HepG2 (cell line): ENCODE measurements at regions of chr4 and their contacts with region 1.

Region 1: DNA sequence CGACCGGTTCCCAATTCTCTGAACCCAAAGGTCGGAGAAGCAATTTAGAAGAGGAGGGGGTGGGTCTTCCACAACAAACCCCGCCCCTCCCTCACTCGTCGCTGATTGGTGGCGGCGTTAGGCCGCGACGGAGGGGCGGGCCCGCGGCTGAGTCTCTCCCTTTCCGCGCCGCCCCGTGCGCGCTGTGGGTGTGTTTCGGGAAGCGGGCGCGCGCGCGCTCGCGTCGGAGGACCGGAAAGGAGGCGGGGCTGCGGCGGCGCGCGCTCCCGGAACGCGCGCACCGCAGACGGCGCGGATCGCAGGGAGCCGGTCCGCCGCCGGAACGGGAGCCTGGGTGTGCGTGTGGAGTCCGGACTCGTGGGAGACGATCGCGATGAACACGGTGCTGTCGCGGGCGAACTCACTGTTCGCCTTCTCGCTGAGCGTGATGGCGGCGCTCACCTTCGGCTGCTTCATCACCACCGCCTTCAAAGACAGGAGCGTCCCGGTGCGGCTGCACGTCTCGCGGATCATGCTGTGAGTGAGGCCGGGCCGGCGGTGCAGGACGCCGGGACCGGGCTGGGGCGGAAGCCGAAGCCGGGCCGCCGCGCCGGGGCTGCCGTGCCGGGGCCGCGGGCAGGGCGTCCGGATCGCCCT is at the start of gene SPCS3:
- DNase-seq: peak; percentile 85
- ATAC-seq: peak; percentile 95
- H3K4me3 ChIP-seq: peak within 1 kb of the TSS; percentile 85 to 98 (median 96)
- H3K27ac ChIP-seq: peak within 1 kb of the TSS; percentile 89
- H3K4me1 ChIP-seq: peaks cover 34% of the 10 kb centered on the region
- H3K27me3 ChIP-seq: no peaks in the 10 kb centered on the region; a peak in 1 of 5 replicates
- CTCF ChIP-seq: no peak
- EP300 ChIP-seq: no peak
- POLR2A ChIP-seq: peak; percentile 92 to 94
- RAD21 ChIP-seq: 0 out of 2 replicates have a peak, but pooled peaks have one; percentile 16
- total RNA-seq, gene SPCS3: 47.2 and 57.0 TPM in 2 replicates

Region 2: DNA sequence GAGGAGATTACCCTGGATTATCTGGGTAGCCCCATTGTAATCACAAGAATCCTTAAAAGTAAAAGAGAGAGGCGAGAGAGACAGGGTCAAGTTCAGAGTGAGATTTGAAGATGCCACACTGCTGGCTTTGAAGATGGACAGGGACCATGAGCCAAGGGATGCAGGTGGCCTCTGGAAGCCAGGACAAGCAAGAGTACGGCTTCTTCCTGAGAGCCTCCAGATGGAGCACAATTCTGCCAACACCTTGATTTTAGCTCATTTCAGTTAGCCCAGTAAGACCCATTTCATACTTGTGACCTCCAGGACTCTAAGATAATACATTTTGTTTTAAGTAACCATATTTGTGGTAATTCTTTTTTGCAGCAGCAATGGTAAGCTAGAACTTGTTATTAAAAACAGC is 628.0 kb before region 1 on chr4:
- CTCF ChIA-PET with region 1: no interaction called
- POLR2A ChIA-PET with region 1: no interaction called
- in situ Hi-C with region 1: no loop called
- intact Hi-C with region 1: no loop called
- DNase-seq: no peak
- ATAC-seq: no peak
- H3K4me3 ChIP-seq: no peak overlapping the region
- H3K27ac ChIP-seq: no peak overlapping the region
- H3K4me1 ChIP-seq: no peaks in the 10 kb centered on the region
- H3K27me3 ChIP-seq: no peaks in the 10 kb centered on the region
- CTCF ChIP-seq: no peak
- EP300 ChIP-seq: no peak
- POLR2A ChIP-seq: no peak
- RAD21 ChIP-seq: no peak

Region 3: DNA sequence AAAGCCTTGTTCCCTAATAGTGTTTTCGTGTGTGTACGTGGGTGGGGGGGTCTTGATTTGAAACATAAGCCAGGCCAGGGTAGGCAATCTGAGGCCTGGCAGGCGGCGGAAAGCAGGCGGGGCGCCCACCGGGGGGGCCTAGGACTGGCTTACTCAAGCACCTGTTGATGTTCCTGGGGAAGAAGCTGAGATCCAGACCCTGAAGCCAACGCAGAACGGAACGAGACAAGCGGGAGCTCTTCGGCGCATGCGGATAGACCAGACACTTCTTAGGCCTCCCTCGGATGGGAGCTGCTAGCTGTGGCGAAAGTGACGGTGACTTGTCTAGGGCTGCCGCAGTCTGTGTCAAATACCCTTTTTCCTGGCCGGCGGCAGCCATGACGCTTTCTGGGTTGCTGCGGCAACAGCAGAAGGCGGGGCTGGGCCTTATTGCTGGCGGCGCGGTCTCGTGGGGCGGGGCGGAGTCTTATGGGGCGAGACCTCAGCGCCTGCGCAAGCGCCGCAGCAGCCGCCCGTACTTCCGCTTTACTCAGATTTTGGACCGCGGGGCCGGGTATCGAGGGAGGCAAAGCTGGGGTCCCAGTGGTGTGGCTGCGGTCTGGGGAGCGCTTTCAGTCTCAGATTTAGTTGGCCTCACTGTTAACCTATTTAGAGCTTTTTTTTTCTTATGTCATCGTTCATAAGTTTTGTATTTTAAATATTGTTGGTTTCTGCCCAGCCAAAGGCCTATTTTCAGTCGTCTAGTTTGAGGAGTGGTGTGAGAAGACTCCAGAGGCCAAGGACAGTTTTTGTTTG is 124.4 kb before region 1 on chr4 and contains the start of gene SPATA4:
- CTCF ChIA-PET with region 1: no interaction called
- POLR2A ChIA-PET with region 1: no interaction called
- in situ Hi-C with region 1: loop called (anchors 10 kb)
- intact Hi-C with region 1: loop called (anchors 5 kb)
- DNase-seq: peak; percentile 65
- ATAC-seq: peak; percentile 99
- H3K4me3 ChIP-seq: peak within 1 kb of the TSS; percentile 24 to 76 (median 52); a peak in 5 of 6 replicates
- H3K27ac ChIP-seq: no peak within 1 kb of the TSS
- H3K4me1 ChIP-seq: no peaks in the 10 kb centered on the region; the same call in 1 of the 2 replicates
- H3K27me3 ChIP-seq: peaks cover 1 to 10% of the 10 kb centered on the region in 2 experiments; a peak in 2 of 5 replicates
- CTCF ChIP-seq: no peak
- EP300 ChIP-seq: no peak
- POLR2A ChIP-seq: no peak
- RAD21 ChIP-seq: no peak
- total RNA-seq, gene SPATA4: not detected in 2 replicates